ENCODE measurements at regions of chr2 and their contacts with region 1.

Region 1: DNA sequence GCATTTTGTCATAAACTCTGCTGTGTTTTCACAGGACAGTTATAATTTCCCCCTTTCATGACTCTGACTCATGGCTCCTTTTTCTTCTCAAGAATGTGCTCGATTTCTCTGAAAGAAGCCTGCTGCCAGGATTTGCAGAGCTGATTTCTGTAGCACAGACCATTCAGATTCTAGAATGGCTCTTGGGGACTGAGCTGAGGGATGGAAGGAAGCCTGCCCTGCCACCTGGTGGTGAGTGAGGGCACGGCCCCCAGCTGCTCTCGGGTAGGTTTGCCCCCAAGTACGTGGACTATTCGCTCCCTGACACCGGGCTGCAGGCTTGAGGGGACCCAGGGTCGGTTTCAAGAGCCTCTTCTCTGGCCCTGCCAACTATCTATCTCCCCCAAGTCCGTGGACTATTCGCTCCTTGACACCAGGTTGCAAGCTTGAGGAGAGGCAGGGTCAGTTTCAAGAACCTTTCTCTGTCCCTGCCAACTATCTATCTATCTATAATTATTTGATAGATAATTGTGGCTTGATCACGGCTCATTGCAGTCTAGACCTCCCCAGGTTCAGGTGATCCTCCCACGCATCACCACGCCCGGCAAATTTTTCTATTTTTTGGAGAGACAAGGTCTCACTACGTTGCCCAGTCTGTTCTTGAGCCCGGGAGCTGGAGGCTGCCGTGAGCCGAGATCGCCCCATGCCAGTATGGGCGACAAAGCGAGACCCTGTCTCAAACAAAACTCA is 1.4 kb upstream of the SMYD5 start:
- DNase-seq: peak; percentile 80
- ATAC-seq: peak; percentile 58
- H3K4me3 ChIP-seq: peak overlapping the region in 1 of 5 experiments; percentile 15
- H3K4me3 Mint-ChIP-seq: peak overlapping the region; percentile 66
- H3K27ac ChIP-seq: no peak overlapping the region
- H3K27ac Mint-ChIP-seq: peak overlapping the region; percentile 50
- H3K4me1 ChIP-seq: peaks cover 17 to 22% of the 10 kb centered on the region in 2 donors
- H3K4me1 Mint-ChIP-seq: peaks cover 31% of the 10 kb centered on the region
- H3K27me3 ChIP-seq: peaks cover 0 to 9% (median 0%) of the 10 kb centered on the region in 4 experiments
- H3K27me3 Mint-ChIP-seq: peaks cover 23% of the 10 kb centered on the region
- CTCF ChIP-seq: peak; percentile 94

Region 2: GRCh38 chr2:72993147-72993932 is 219.3 kb before region 1 on chr2:
- CTCF ChIA-PET with region 1: interaction called, 8 read pairs
- POLR2A ChIA-PET with region 1: no interaction called
- intact Hi-C with region 1: loop called (anchors 1 kb)
- DNase-seq: peak; percentile 75
- ATAC-seq: peak; percentile 63
- H3K4me3 ChIP-seq: no peak overlapping the region
- H3K4me3 Mint-ChIP-seq: no peak overlapping the region
- H3K27ac ChIP-seq: no peak overlapping the region
- H3K27ac Mint-ChIP-seq: no peak overlapping the region
- H3K4me1 ChIP-seq: no peaks in the 10 kb centered on the region
- H3K4me1 Mint-ChIP-seq: no peaks in the 10 kb centered on the region
- H3K27me3 ChIP-seq: no peaks in the 10 kb centered on the region
- H3K27me3 Mint-ChIP-seq: no peaks in the 10 kb centered on the region
- CTCF ChIP-seq: peak; percentile 91

Region 3: DNA sequence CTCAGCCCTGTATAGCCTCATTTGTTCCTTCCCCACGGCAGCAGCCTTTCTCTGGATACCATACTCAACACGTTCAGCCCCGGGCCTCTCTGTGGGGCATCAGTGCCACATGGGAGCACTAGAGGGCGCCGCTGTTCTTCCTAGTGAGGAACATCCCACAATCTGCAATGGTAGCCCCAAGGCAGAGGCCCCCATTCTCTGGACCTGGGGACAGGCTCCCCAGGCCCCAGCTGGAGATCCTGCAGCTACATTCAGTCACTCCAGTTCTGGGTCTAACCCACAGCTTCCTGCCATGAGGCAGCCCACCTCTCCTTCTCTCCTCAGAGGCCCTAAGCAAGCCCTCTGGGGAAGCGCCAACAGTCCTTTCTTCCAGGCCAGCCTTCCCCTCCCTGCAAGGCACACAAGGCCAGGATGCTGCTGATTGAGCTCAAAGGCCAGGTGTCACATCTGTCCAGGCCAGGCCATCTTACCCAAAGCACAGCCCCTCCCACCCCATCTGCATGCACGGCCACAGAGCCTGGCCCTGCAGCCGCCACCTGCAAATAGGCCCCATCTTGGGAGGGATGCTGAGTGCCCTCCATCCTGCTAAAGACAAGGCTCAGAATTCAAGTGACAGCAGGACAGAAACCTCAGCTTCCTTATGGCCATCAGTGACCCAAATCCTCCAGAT is 126.8 kb before region 1 on chr2:
- CTCF ChIA-PET with region 1: interaction called, 38 read pairs
- POLR2A ChIA-PET with region 1: no interaction called
- intact Hi-C with region 1: loop called (anchors 1 kb)
- DNase-seq: peak; percentile 80
- ATAC-seq: peak; percentile 90
- H3K4me3 ChIP-seq: no peak overlapping the region
- H3K4me3 Mint-ChIP-seq: no peak overlapping the region
- H3K27ac ChIP-seq: no peak overlapping the region
- H3K27ac Mint-ChIP-seq: no peak overlapping the region
- H3K4me1 ChIP-seq: no peaks in the 10 kb centered on the region
- H3K4me1 Mint-ChIP-seq: no peaks in the 10 kb centered on the region
- H3K27me3 ChIP-seq: peaks cover 0 to 4% (median 2%) of the 10 kb centered on the region in 4 experiments
- H3K27me3 Mint-ChIP-seq: peaks cover 11% of the 10 kb centered on the region
- CTCF ChIP-seq: peak; percentile 78

Region 4: GRCh38 chr2:73176881-73177644 is 35.5 kb before region 1 on chr2:
- CTCF ChIA-PET with region 1: interaction called, 56 read pairs
- POLR2A ChIA-PET with region 1: no interaction called
- intact Hi-C with region 1: loop called (anchors 1 kb)
- DNase-seq: peak; percentile 92
- ATAC-seq: peak; percentile 93
- H3K4me3 ChIP-seq: peak overlapping the region; percentile 51 to 76 (median 64)
- H3K4me3 Mint-ChIP-seq: peak overlapping the region; percentile 94
- H3K27ac ChIP-seq: no peak overlapping the region
- H3K27ac Mint-ChIP-seq: peak overlapping the region; percentile 41
- H3K4me1 ChIP-seq: peaks cover 24 to 28% of the 10 kb centered on the region in 2 donors
- H3K4me1 Mint-ChIP-seq: peaks cover 16% of the 10 kb centered on the region
- H3K27me3 ChIP-seq: peaks cover 0 to 58% (median 16%) of the 10 kb centered on the region in 4 experiments
- H3K27me3 Mint-ChIP-seq: peaks cover 59% of the 10 kb centered on the region
- CTCF ChIP-seq: peak; percentile 98

Region 5: GRCh38 chr2:73284296-73285158 is 71.9 kb after region 1 on chr2 and contains the start of gene FBXO41:
- CTCF ChIA-PET with region 1: interaction called, 14 read pairs
- POLR2A ChIA-PET with region 1: no interaction called
- intact Hi-C with region 1: loop called (anchors 1 kb)
- DNase-seq: peak; percentile 81
- ATAC-seq: peak; percentile 72
- H3K4me3 ChIP-seq: peak within 1 kb of the TSS; percentile 40 to 81 (median 75)
- H3K4me3 Mint-ChIP-seq: peak within 1 kb of the TSS; percentile 93
- H3K27ac ChIP-seq: peak within 1 kb of the TSS; percentile 80 to 81
- H3K27ac Mint-ChIP-seq: peak within 1 kb of the TSS; percentile 91
- H3K4me1 ChIP-seq: peaks cover 21 to 34% of the 10 kb centered on the region in 2 donors
- H3K4me1 Mint-ChIP-seq: peaks cover 32% of the 10 kb centered on the region
- H3K27me3 ChIP-seq: peaks cover 0 to 6% (median 0%) of the 10 kb centered on the region in 4 experiments
- H3K27me3 Mint-ChIP-seq: peaks cover 2% of the 10 kb centered on the region
- CTCF ChIP-seq: peak; percentile 3
- total RNA-seq, gene FBXO41: 23.7 and 25.2 TPM in 2 replicates

Region 6: DNA sequence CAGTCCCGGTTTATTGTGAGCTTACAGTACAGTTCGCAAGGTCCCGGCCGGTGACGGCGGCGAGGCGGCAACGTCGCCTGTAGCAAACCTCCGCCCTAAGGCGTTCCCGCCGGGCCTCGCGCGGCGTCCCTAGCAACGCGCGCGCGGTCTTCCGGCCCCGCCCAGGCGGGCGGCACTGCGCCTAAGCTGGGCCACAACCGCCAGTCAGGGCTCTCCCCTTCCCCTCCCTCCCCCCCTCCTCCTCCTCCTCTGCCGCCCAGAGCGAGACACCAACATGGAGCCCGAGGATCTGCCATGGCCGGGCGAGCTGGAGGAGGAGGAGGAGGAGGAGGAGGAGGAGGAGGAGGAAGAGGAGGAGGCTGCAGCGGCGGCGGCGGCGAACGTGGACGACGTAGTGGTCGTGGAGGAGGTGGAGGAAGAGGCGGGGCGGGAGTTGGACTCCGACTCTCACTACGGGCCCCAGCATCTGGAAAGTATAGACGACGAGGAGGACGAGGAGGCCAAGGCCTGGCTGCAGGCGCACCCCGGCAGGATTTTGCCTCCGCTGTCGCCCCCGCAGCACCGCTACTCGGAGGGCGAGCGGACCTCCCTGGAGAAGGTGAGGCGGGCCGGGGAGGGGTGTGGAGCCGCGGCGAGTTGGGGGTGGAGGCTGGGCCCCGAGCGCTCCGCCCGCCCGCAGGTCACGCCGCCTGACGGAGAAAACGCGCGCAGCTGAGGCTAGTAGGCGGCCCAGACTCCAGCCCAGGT is 173.2 kb after region 1 on chr2 and contains the start of gene ALMS1:
- CTCF ChIA-PET with region 1: no interaction called
- POLR2A ChIA-PET with region 1: no interaction called
- intact Hi-C with region 1: loop called (anchors 1 kb)
- DNase-seq: peak; percentile 93
- ATAC-seq: peak; percentile 80
- H3K4me3 ChIP-seq: peak within 1 kb of the TSS; percentile 56 to 87 (median 82)
- H3K4me3 Mint-ChIP-seq: peak within 1 kb of the TSS; percentile 90
- H3K27ac ChIP-seq: peak within 1 kb of the TSS; percentile 80 to 82
- H3K27ac Mint-ChIP-seq: peak within 1 kb of the TSS; percentile 93
- H3K4me1 ChIP-seq: peaks cover 18 to 20% of the 10 kb centered on the region in 2 donors
- H3K4me1 Mint-ChIP-seq: peaks cover 23% of the 10 kb centered on the region
- H3K27me3 ChIP-seq: peaks cover 0 to 8% (median 4%) of the 10 kb centered on the region in 4 experiments
- H3K27me3 Mint-ChIP-seq: peaks cover 17% of the 10 kb centered on the region
- CTCF ChIP-seq: no peak
- total RNA-seq, gene ALMS1: 32.1 and 33.1 TPM in 2 replicates

Measured in B cell (primary cell).